ENCODE measurements at regions of chr5 and their contacts with region 1.

Region 1: DNA sequence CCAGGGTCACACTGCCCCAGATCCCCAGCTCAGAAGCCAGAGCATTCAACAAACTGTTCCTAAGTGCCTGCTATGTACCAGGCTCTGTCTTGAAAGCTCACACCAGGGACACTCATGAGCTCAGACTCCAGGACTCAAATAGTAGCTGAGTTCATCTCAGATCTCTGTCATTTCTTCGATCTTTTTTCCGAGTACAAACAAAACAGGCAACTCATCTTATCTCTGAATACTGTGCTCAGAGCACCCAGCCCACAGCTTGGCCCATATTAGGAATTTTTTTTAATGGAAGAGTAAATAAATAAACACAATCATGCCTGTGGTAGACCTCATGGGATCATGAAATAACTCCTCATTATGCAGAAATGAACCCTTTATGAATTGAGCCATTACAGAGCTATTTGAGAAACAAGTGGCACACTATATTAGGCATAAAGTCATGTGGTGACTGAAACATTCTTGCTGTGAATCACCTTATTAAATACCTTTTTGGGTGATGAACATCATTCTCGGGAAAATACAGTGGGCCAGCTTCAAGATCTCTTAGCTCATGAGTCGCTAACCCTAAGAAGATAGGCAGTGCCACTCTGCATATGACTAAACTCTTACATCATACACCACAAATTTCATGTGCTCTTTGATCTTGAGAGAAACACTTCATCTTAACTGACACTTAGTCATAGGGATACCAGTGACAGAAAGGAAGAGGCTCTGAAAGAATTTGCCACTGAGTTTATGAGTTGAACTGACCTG is 9.9 kb downstream of the SH3RF2 start:
- DNase-seq: peak; percentile 37
- ATAC-seq: peak; percentile 81
- H3K4me3 Mint-ChIP-seq: no peak overlapping the region
- H3K27ac Mint-ChIP-seq: no peak overlapping the region
- H3K4me1 Mint-ChIP-seq: peaks cover 32% of the 10 kb centered on the region
- H3K27me3 Mint-ChIP-seq: peaks cover 47% of the 10 kb centered on the region

Region 2: GRCh38 chr5:145378226-145378625 is 568.1 kb before region 1 on chr5:
- CTCF ChIA-PET with region 1: no interaction called
- POLR2A ChIA-PET with region 1: no interaction called
- intact Hi-C with region 1: no loop called
- DNase-seq: no peak
- ATAC-seq: no peak
- H3K4me3 Mint-ChIP-seq: no peak overlapping the region
- H3K27ac Mint-ChIP-seq: no peak overlapping the region
- H3K4me1 Mint-ChIP-seq: no peaks in the 10 kb centered on the region
- H3K27me3 Mint-ChIP-seq: no peaks in the 10 kb centered on the region

Region 3: DNA sequence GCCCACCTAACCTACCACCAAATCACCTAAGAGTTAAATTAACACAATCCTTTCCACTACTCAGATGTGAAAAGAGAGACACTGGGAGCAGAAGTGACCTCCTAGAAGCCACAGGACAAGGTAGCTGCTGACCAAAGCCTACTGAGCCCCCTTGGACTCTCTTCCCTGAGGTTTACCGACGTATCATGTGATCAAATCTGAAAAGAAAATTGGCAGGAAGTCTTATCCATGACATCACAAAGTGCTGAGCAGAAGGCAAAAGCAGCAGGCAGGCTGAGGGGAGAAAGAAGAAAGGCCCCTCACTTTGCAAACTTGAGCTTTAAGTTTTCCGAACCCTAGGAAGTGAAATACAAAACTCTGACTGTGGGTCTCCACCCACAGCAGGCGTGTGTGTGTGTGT is 122.2 kb before region 1 on chr5:
- CTCF ChIA-PET with region 1: no interaction called
- POLR2A ChIA-PET with region 1: no interaction called
- intact Hi-C with region 1: no loop called
- DNase-seq: no peak
- ATAC-seq: no peak
- H3K4me3 Mint-ChIP-seq: no peak overlapping the region
- H3K27ac Mint-ChIP-seq: no peak overlapping the region
- H3K4me1 Mint-ChIP-seq: no peaks in the 10 kb centered on the region
- H3K27me3 Mint-ChIP-seq: peaks cover 1% of the 10 kb centered on the region

Region 4: DNA sequence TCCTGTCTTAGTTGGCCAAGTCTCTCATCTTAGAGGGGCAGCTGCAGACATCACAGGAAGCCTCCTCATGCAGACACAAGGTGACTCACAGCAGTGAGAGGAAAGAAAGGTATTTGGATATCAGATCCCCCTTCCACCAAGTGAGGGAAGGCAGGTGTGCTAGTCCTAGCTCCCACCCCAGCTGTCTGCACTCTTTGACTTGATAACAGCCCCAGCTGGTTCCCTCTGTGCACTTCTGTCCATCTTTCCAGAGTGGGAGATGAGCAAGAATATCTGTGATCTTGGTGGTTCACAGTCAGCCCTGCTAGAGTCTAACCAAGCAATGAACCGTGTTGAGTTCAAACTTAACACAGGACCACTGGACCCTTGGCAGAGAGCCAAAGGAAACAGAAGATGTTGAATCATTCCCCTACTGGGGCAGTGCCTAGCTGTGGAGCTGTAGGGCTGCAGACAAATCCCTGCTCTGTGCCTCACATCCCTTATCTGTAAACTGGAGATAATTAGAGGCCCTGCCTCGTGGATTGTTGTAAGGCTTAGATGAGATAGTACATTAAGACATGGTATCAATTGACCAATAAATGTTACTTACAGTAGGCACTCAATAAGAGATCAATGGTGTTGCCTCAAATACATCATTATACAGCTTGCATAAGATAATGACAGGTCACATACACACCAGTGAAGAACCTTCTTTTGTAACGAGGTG is 29.2 kb after region 1 on chr5:
- CTCF ChIA-PET with region 1: no interaction called
- POLR2A ChIA-PET with region 1: no interaction called
- intact Hi-C with region 1: loop called in 1 of 2 experiments (anchors 2 kb)
- DNase-seq: peak; percentile 8
- ATAC-seq: no peak
- H3K4me3 Mint-ChIP-seq: no peak overlapping the region
- H3K27ac Mint-ChIP-seq: no peak overlapping the region
- H3K4me1 Mint-ChIP-seq: peaks cover 4% of the 10 kb centered on the region
- H3K27me3 Mint-ChIP-seq: peaks cover 8% of the 10 kb centered on the region

Region 5: DNA sequence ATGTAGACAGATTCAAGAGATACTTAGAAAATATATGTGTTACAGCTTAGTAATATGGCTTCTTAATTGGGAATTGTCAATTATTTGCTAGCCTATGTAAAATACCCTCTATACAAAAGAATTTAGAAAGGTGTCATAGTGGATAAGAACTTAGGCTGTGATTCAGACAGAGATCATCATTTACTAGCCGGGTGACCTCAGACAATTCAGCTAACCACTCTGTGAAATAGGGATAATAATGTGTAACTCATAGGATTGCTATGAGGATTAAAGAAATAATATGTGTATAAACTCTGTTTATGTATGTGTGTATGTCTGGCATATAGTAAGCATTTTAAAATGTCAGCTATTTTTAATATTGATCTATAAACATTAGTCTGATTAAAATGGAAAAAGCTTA is 242.1 kb after region 1 on chr5:
- CTCF ChIA-PET with region 1: no interaction called
- POLR2A ChIA-PET with region 1: no interaction called
- intact Hi-C with region 1: loop called in 1 of 2 experiments (anchors 2 kb)
- DNase-seq: no peak
- ATAC-seq: no peak
- H3K4me3 Mint-ChIP-seq: no peak overlapping the region
- H3K27ac Mint-ChIP-seq: no peak overlapping the region
- H3K4me1 Mint-ChIP-seq: peaks cover 9% of the 10 kb centered on the region
- H3K27me3 Mint-ChIP-seq: peaks cover 5% of the 10 kb centered on the region